ENCODE measurements at regions of chr11 and their contacts with region 1.

Region 1: GRCh38 chr11:93225662-93226061 is 27.9 kb upstream of the SLC36A4 start:
- DNase-seq: no peak
- ATAC-seq: peak in 1 of 4 donors; percentile 38
- H3K4me3 ChIP-seq: no peak overlapping the region
- H3K27ac ChIP-seq: no peak overlapping the region
- H3K4me1 ChIP-seq: no peaks in the 10 kb centered on the region
- H3K27me3 ChIP-seq: peaks cover 0 to 3% (median 0%) of the 10 kb centered on the region in 3 donors
- CTCF ChIP-seq: peak; percentile 50

Region 2: GRCh38 chr11:92552942-92553341 is 672.7 kb before region 1 on chr11:
- intact Hi-C with region 1: no loop called
- DNase-seq: no peak
- ATAC-seq: no peak
- H3K4me3 ChIP-seq: no peak overlapping the region
- H3K27ac ChIP-seq: no peak overlapping the region
- H3K4me1 ChIP-seq: no peaks in the 10 kb centered on the region
- H3K27me3 ChIP-seq: no peaks in the 10 kb centered on the region
- CTCF ChIP-seq: no peak

Region 3: GRCh38 chr11:92941676-92942571 is 283.7 kb before region 1 on chr11:
- intact Hi-C with region 1: loop called (anchors 5 to 10 kb)
- DNase-seq: no peak
- ATAC-seq: no peak
- H3K4me3 ChIP-seq: no peak overlapping the region
- H3K27ac ChIP-seq: no peak overlapping the region
- H3K4me1 ChIP-seq: no peaks in the 10 kb centered on the region
- H3K27me3 ChIP-seq: no peaks in the 10 kb centered on the region
- CTCF ChIP-seq: peak; percentile 43

Region 4: GRCh38 chr11:93192163-93192562 is 33.5 kb before region 1 on chr11:
- intact Hi-C with region 1: no loop called
- DNase-seq: no peak
- ATAC-seq: no peak
- H3K4me3 ChIP-seq: no peak overlapping the region
- H3K27ac ChIP-seq: no peak overlapping the region
- H3K4me1 ChIP-seq: peaks cover 6% of the 10 kb centered on the region
- H3K27me3 ChIP-seq: no peaks in the 10 kb centered on the region
- CTCF ChIP-seq: no peak

Region 5: GRCh38 chr11:93630037-93630436 is 404.4 kb after region 1 on chr11:
- intact Hi-C with region 1: loop called (anchors 5 to 10 kb)
- DNase-seq: no peak
- ATAC-seq: no peak
- H3K4me3 ChIP-seq: no peak overlapping the region
- H3K27ac ChIP-seq: no peak overlapping the region
- H3K4me1 ChIP-seq: no peaks in the 10 kb centered on the region
- H3K27me3 ChIP-seq: peaks cover 0 to 3% (median 0%) of the 10 kb centered on the region in 3 donors
- CTCF ChIP-seq: no peak